Common myeloid progenitor, CD34-positive (primary cell): ENCODE measurements at regions of chr4 and their contacts with region 1.

Region 1: DNA sequence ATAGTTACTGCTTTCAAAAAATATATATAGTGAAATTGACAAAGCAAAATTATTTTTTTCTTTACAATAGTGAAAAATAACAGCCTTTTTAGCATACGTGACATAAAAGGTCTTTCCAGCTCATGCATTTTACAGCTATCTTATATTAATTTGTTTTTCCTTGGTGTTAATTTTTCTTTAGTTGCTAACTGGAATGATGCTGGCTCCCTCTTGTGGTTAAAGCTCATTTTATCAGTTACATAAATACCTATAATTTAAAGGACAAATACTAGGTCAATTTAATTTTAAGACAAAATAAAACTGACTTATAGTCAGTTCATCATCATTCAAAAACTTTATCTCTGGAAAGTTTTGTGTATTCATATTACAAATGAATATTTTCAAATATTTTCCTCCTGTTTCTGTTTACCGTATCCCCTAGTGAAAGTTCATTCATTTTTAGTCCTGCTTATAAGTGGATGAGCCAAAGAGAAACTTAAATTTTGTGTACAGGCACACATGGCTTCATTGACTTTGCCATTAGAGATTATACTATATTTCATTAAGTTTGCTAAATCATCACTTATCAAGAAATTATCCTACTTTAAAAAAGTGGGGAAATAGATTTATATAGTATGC is 9.9 kb upstream of the ANAPC4 start:
- DNase-seq: peak; percentile 57 to 77 (median 66)
- H3K4me3 ChIP-seq: no peak overlapping the region
- H3K27ac ChIP-seq: no peak overlapping the region
- H3K4me1 ChIP-seq: no peaks in the 10 kb centered on the region
- H3K27me3 ChIP-seq: no peaks in the 10 kb centered on the region

Region 2: GRCh38 chr4:25180524-25181131 is 186.5 kb before region 1 on chr4:
- CTCF ChIA-PET with region 1: interaction called, 15 read pairs
- POLR2A ChIA-PET with region 1: no interaction called
- DNase-seq: peak; percentile 86 to 94 (median 94)
- H3K4me3 ChIP-seq: no peak overlapping the region
- H3K27ac ChIP-seq: no peak overlapping the region
- H3K4me1 ChIP-seq: no peaks in the 10 kb centered on the region
- H3K27me3 ChIP-seq: no peaks in the 10 kb centered on the region

Region 3: GRCh38 chr4:25312496-25313200 is 54.5 kb before region 1 on chr4 and contains the start of gene ZCCHC4:
- CTCF ChIA-PET with region 1: interaction called, 34 read pairs
- POLR2A ChIA-PET with region 1: no interaction called
- DNase-seq: peak; percentile 90 to 95 (median 94)
- H3K4me3 ChIP-seq: peak within 1 kb of the TSS; percentile 88 to 100 (median 95)
- H3K27ac ChIP-seq: peak within 1 kb of the TSS; percentile 76 to 87
- H3K4me1 ChIP-seq: peaks cover 4 to 20% (median 16%) of the 10 kb centered on the region in 4 experiments
- H3K27me3 ChIP-seq: no peaks in the 10 kb centered on the region

Region 4: GRCh38 chr4:25484243-25484721 is 117.2 kb after region 1 on chr4:
- CTCF ChIA-PET with region 1: no interaction called
- POLR2A ChIA-PET with region 1: no interaction called
- DNase-seq: peak in 1 of 3 donors; percentile 15
- H3K4me3 ChIP-seq: no peak overlapping the region
- H3K27ac ChIP-seq: no peak overlapping the region
- H3K4me1 ChIP-seq: no peaks in the 10 kb centered on the region
- H3K27me3 ChIP-seq: no peaks in the 10 kb centered on the region